Prostate gland (tissue), 2 donors: ENCODE measurements at regions of chr19 and their contacts with region 1.

Region 1: DNA sequence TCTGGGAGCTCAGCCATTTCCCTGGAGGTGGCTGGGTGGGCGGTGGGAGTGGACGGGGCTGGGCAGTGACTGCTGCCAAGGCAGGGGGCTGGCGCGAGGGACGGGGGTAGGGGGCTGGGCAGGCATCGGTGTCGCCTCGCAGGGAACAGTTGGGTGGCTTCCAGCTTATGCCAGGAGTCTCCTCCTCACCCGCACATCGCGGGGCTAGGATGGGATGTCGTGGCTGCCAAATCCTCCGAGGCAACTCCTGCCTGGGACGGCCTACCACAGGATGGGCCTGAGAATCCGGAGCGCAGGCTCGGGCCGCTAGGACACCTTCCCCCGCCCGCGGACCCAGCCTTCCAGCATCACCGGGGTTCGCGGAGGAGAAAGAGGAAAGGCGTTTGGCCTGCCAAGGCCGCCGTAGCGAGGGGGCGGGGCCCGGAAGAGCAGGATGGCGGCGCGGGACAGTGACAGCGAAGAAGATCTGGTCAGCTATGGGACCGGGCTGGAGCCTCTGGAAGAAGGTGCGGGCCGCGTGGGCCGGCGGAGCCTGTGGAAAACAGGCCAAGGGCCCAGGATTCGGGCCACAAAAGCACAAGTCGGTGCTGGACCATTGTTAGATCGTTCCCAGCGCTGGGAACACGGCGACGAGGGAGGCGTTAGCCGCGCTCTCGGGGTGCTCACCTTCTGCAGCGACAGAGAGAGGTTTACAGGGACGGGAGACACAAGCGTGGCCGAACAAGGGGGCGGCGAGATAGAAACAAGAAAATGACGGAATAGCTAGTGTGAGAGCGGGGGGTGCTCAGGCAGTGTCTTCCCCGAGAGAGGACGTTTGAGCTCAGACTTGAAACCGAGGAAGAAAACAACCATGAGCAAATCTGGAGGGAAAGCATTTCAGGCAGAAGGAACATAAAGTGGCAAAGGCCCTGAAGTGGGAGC is at the start of gene GPATCH1:
- DNase-seq: peak; percentile 86
- H3K4me3 ChIP-seq: peak within 1 kb of the TSS; percentile 62 to 92
- H3K27ac ChIP-seq: peak within 1 kb of the TSS; percentile 80 to 81
- H3K4me1 ChIP-seq: peaks cover 5% of the 10 kb centered on the region
- H3K27me3 ChIP-seq: no peaks in the 10 kb centered on the region
- CTCF ChIP-seq: peak in 1 of 4 experiments; percentile 14
- POLR2A ChIP-seq: peak; percentile 48
- total RNA-seq, gene GPATCH1: 7.9 to 12.2 TPM

Region 2: GRCh38 chr19:32971715-32972540 is 109.1 kb before region 1 on chr19 and contains the starts of genes CEP89 and FAAP24:
- intact Hi-C with region 1: loop called (anchors 5 kb)
- DNase-seq: peak; percentile 99
- H3K4me3 ChIP-seq: peak within 1 kb of the TSS; percentile 70
- H3K27ac ChIP-seq: peak within 1 kb of the TSS; percentile 72 to 82
- H3K4me1 ChIP-seq: peaks cover 14% of the 10 kb centered on the region
- H3K27me3 ChIP-seq: no peaks in the 10 kb centered on the region
- CTCF ChIP-seq: peak in 2 of 4 experiments; percentile 9 to 31
- POLR2A ChIP-seq: peak; percentile 28
- total RNA-seq, gene CEP89: 19.3 to 20.6 TPM
- total RNA-seq, gene FAAP24: 4.3 to 8.3 TPM

Region 3: GRCh38 chr19:32988724-32989123 is 92.3 kb before region 1 on chr19:
- intact Hi-C with region 1: no loop called
- DNase-seq: no peak
- H3K4me3 ChIP-seq: no peak overlapping the region
- H3K27ac ChIP-seq: no peak overlapping the region
- H3K4me1 ChIP-seq: no peaks in the 10 kb centered on the region
- H3K27me3 ChIP-seq: no peaks in the 10 kb centered on the region
- CTCF ChIP-seq: no peak
- POLR2A ChIP-seq: no peak

Region 4: DNA sequence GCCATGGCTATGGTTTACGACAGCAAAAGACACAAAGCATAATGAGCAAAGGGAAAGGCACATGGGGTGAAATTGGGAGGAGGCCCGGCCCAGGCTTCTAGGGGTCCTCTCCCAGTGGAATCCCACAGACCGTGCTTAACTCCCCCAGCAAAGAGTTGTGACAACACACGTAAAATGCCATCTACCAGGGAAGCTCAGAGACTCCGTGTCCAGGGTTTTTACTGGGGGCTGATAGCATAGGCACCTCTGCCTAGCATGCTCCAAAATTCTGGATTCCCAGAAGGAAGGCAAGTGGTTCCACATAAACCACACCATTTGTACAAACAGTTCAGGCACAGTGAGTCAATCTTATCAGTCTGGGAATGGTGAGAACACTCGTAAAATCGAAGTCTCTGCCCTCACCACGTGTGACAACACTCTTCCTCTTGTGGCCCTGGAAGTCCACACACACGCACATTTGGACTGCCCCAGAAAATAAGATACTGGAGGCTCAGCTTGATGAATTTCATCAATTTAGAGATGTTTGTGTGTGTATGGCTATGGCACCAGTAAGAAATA is 51.2 kb before region 1 on chr19:
- intact Hi-C with region 1: no loop called
- DNase-seq: peak; percentile 57
- H3K4me3 ChIP-seq: no peak overlapping the region
- H3K27ac ChIP-seq: peak overlapping the region; percentile 81 to 87
- H3K4me1 ChIP-seq: peaks cover 10% of the 10 kb centered on the region
- H3K27me3 ChIP-seq: no peaks in the 10 kb centered on the region
- CTCF ChIP-seq: no peak
- POLR2A ChIP-seq: no peak

Region 5: GRCh38 chr19:33098023-33098652 is 17.1 kb after region 1 on chr19:
- intact Hi-C with region 1: no loop called
- DNase-seq: no peak
- H3K4me3 ChIP-seq: no peak overlapping the region
- H3K27ac ChIP-seq: no peak overlapping the region
- H3K4me1 ChIP-seq: no peaks in the 10 kb centered on the region
- H3K27me3 ChIP-seq: no peaks in the 10 kb centered on the region
- CTCF ChIP-seq: no peak
- POLR2A ChIP-seq: no peak